AG04449 (cell line): ENCODE measurements at regions of chr11 and their contacts with region 1.

Region 1: DNA sequence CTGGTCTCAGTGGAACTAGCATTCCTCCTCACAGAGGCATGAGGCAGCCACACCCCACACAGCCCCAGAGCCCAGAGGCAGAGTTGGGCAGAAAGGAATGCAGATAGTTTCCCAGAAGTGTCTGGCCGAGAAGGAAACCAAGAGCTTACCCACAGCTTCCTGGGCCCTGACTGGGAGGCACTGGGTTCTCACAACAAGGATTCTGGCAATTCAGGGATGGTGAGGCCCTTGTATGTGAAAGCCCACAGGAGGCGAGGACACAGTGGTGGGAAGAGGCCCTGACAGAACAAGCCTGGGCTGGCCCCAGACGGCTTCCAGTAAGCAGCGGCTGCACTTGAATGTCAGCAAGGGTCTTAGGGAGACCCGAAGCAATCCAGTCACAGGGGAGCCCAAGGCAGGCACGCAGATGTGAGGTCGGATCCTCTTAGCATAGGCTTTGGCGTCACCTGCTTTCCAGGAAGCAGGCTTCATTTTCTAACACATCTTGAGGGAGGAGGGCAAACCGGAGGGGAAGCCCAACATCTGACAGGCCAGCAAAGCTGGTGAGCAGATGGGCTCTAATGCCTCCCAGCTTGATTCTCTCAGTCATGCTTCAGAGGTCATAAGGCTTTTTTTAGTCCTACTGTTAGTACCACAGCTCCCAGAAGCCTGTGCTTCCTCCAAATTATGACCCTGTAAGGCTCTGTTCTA is 78.3 kb upstream of the AKIP1 start:
- DNase-seq: no peak
- H3K4me3 ChIP-seq: peak overlapping the region; percentile 12; the same call in 1 of the 2 replicates
- CTCF ChIP-seq: no peak

Region 2: GRCh38 chr11:8807544-8808225 is 25.0 kb before region 1 on chr11:
- CTCF ChIA-PET with region 1: interaction called, 23 read pairs
- POLR2A ChIA-PET with region 1: interaction called, 15 read pairs
- DNase-seq: no peak
- H3K4me3 ChIP-seq: peak overlapping the region; percentile 81
- CTCF ChIP-seq: no peak

Region 3: DNA sequence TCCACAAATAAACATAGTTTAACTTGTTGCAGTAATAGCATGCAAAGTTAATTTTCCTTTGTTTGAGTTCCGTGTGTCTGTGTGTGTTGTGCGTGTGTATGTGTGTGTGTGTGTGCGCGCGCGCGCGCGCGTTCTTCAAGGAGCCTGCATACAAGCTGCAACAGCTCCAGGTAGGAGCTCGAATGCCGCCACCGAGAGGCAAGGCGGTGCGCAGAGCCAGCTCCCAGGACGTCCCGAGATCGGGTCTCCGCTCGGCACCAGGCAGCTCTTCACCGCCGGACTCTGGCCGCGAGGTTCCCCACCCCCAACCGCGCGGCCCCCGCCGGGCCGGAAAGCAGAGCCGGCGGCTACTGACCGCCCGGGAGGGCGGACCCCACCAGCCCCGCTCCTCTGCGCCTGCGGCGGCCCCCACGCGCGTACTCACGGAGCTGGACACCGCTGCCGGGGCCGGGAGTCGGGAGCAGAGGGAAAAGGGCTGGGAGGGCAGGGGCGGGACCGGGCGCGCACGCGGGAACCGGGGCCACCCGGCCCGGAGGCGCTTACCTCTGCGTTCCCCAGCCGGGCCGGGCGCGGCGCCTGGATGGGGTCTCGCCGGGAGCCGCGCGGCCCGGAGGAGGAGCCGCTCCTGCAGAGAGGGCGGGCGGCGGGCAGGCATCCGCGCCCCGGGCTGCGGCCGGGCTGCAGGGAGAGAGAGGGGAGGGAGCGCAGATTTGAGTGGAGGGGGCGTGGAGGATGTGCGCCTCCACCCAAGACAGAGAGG is 37.9 kb after region 1 on chr11:
- CTCF ChIA-PET with region 1: interaction called, 25 read pairs
- POLR2A ChIA-PET with region 1: interaction called, 10 read pairs
- DNase-seq: no peak
- H3K4me3 ChIP-seq: peak overlapping the region; percentile 77
- CTCF ChIP-seq: no peak